Activated CD8-positive, alpha-beta T cell treated with anti-CD3 and anti-CD28 coated beads, Interleukin-2, amount 10 ng/mL, durations not matched to agents 7 days and 5 days (primary cell): ENCODE measurements at regions of chr3 and their contacts with region 1.

Region 1: GRCh38 chr3:149567381-149567780 is 90.4 kb downstream of the WWTR1 start:
- DNase-seq: no peak
- ATAC-seq: no peak
- H3K4me3 Mint-ChIP-seq: no peak overlapping the region
- H3K27ac Mint-ChIP-seq: no peak overlapping the region
- H3K4me1 Mint-ChIP-seq: no peaks in the 10 kb centered on the region
- H3K27me3 Mint-ChIP-seq: peaks cover 7% of the 10 kb centered on the region

Region 2: DNA sequence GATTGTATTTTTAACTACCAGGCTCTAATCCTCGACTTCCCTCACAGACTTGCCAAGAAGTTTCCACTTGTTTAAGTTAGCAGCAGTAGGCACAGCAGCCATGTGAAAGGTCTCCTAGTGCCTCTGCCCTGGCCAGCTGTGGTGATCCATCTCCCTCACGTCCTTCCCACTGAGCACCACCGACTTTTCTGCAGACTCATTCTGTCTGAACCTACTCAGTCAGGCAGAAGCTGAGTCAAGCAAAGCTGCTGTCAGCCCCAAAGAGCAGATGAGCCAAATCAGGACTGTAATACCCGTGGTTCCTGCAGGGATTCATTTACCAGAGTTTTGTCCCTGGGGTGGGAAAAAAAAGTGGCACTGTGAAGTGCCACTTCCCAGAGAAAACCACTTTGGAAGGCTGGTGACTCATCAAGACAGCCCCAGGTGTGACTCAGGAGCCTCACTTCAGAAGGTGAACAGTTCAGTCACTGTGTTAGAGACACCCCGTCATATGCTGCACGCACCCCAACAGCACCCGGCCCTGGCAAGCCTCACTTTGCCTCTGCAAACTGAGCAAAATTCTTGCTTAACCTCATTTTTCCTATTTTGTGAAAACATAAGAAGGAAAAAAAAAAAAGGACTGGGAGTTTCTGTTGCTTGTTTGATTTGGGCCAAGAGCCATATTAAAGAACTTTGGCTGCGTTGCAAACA is 14.4 kb after region 1 on chr3:
- CTCF ChIA-PET with region 1: interaction called, 19 read pairs
- POLR2A ChIA-PET with region 1: no interaction called
- DNase-seq: no peak
- ATAC-seq: no peak
- H3K4me3 Mint-ChIP-seq: no peak overlapping the region
- H3K27ac Mint-ChIP-seq: no peak overlapping the region
- H3K4me1 Mint-ChIP-seq: peaks cover 19% of the 10 kb centered on the region
- H3K27me3 Mint-ChIP-seq: peaks cover 23% of the 10 kb centered on the region

Region 3: GRCh38 chr3:149717391-149718056 is 150.1 kb after region 1 on chr3:
- CTCF ChIA-PET with region 1: interaction called, 21 read pairs
- POLR2A ChIA-PET with region 1: no interaction called
- DNase-seq: peak; percentile 40
- ATAC-seq: no peak
- H3K4me3 Mint-ChIP-seq: no peak overlapping the region
- H3K27ac Mint-ChIP-seq: no peak overlapping the region
- H3K4me1 Mint-ChIP-seq: no peaks in the 10 kb centered on the region
- H3K27me3 Mint-ChIP-seq: peaks cover 3% of the 10 kb centered on the region

Region 4: DNA sequence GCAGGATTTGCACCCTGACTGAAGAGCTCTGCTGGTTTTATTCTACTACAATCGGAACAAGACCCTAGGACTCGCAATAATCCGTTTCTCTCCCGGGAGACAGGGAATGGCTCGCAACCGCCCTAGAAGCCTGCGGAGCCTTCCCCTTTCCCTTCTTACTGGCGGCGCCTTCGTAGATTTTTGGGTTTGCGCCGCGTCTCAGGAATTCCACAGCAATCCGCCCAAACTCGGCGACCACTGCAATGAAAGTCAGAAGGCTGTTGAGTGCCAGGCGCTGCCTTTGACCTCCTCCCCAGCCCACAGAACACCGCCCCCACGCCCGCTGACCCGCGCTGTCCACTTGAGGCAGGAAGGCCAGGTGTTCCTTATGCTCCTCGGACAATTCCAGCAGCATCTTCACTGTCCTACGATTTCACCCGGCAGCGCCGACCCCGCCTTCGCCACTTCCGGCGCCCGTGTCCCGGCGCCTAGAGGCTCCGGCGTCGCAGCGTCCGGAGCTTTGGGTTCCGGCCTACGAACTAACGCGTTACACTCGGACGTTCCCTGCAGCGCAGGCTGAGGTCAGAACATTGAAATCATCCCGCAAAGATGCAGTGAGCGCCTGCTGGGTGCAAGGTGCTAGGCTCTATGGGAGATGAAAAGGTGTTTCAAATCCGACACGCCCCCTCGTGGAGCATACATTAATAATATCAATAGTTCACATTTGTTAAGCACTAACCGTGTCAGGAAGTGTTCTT is 184.8 kb after region 1 on chr3 and contains the start of gene COMMD2:
- CTCF ChIA-PET with region 1: interaction called, 10 read pairs
- POLR2A ChIA-PET with region 1: no interaction called
- DNase-seq: peak; percentile 86
- ATAC-seq: peak; percentile 99
- H3K4me3 Mint-ChIP-seq: peak within 1 kb of the TSS; percentile 95
- H3K27ac Mint-ChIP-seq: peak within 1 kb of the TSS; percentile 93
- H3K4me1 Mint-ChIP-seq: peaks cover 17% of the 10 kb centered on the region
- H3K27me3 Mint-ChIP-seq: no peaks in the 10 kb centered on the region
- total RNA-seq, gene COMMD2: 32.3 to 35.1 TPM

Region 5: DNA sequence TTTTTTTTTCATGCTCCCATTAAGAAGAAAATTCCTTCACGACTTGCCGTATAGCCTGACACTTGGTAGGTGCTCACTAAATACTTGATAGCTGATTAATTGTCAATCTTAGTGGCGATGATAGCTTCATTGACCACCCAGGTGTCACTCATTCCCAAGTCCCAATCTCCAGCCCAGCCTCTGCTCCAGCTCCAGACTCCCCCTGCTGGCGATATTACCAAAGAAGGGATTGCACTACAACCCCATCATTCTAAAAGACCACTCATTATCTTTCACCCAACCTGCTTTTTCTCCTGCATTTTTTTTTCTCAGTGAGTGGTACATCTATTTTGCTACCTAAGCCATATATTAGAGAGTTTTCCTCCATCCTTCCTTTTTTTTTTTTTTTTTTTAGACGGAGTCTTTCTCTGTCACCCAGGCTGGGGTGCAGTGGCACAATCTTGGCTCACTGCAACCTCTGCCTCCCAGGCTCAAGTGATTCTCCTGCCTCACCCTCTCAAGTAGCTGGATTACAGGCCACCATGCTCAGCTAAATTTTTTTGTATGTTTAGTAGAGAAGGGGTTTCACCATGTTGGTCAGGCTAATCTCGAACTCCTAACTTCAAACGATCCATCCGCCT is 204.4 kb after region 1 on chr3:
- CTCF ChIA-PET with region 1: interaction called, 22 read pairs
- POLR2A ChIA-PET with region 1: no interaction called
- DNase-seq: peak; percentile 60
- ATAC-seq: peak; percentile 65
- H3K4me3 Mint-ChIP-seq: no peak overlapping the region
- H3K27ac Mint-ChIP-seq: no peak overlapping the region
- H3K4me1 Mint-ChIP-seq: no peaks in the 10 kb centered on the region
- H3K27me3 Mint-ChIP-seq: peaks cover 22% of the 10 kb centered on the region